Panc1 (cell line): ENCODE measurements at regions of chr7 and their contacts with region 1.

Region 1: DNA sequence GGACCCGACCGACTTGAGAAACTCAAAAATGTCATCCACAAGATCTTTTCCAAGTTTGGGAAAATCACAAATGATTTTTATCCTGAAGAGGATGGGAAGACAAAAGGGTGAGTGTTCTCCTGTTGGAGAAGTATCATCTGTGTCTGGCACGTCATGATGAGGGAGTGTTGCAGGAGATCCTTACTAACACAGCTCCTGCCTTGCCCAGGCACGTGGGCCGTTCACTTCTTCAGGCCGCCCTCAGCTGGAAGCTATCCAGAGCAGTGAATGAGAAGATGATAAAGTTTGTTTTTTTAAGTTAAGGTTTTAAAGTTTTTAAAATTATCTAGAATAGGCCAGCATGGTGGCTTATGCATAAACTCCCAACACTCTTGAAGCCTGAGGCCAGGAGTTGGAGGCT is 6.2 kb downstream of the EIF3B start:
- DNase-seq: no peak
- ATAC-seq: no peak
- H3K4me3 ChIP-seq: no peak overlapping the region
- H3K27ac ChIP-seq: peak overlapping the region; percentile 32; the same call in 1 of the 2 replicates
- H3K4me1 ChIP-seq: peaks cover 20% of the 10 kb centered on the region
- H3K27me3 ChIP-seq: no peaks in the 10 kb centered on the region
- CTCF ChIP-seq: no peak

Region 2: DNA sequence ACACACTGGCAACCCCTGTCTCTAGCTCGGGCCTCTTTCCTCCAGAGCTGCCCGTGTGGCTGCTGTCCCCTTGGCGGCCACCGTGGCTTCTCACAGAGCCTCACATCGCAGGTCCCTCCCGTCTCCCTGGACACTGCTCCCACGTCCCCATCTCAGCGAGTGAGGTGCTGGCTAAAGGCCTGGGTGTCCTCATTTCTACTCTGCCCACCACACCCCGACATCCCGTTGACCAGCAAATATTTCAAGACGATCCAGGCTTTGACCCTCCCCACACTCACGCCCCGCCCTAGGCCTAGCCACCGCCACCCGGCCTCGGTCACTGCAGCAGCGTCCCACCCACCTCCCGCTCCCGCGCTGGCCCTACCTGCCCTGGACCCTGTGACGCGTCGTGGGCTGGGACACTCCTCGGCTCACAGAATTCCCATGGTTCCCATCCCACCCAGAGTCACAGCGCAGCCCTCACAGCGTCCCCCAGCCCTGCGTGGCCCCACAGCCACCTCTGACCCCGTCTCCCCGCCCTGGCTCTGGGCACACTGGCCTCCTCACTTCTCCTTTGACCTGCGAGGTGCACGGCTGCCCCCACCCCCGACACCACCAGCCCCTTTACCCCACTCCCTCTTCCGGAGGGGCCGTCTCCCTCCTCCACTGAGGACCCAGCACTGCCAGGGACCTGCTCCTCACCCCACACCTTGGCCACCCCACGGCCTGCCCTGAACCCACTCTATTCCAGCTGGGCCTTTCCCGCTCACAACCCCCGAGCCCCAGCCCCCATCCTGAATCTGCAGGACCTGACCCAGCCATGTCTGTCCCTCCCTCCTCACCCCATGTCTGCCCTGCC is 1413.2 kb before region 1 on chr7:
- CTCF ChIA-PET with region 1: interaction called, 18 read pairs
- POLR2A ChIA-PET with region 1: no interaction called
- in situ Hi-C with region 1: no loop called
- intact Hi-C with region 1: no loop called
- DNase-seq: no peak
- ATAC-seq: no peak; the same call in 1 of the 2 replicates
- H3K4me3 ChIP-seq: no peak overlapping the region
- H3K27ac ChIP-seq: no peak overlapping the region
- H3K4me1 ChIP-seq: peaks cover 7% of the 10 kb centered on the region; the same call in 1 of the 2 replicates
- H3K27me3 ChIP-seq: no peaks in the 10 kb centered on the region
- CTCF ChIP-seq: no peak